ENCODE measurements at regions of chr18 and their contacts with region 1.

Region 1: DNA sequence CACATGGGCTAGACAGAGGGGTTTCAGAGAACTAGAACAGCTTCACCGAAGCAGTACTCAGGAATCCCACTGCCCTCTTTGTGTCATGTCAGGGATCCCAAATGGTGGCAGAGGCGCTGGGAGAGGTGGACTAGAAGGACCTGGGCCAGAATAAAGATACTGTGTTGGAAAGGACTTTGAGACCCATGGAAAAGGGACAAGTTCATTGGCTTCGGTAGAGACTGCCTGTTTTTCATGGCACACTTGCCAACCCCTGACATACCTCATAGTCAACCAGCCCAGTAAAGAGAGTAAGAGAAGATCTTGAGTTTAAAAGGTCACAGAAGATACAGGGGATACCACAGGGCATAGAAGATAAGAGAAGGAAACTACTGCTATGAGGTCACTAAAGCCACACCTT is 381.0 kb downstream of the RIT2 start:
- DNase-seq: no peak
- ATAC-seq: no peak

Region 2: DNA sequence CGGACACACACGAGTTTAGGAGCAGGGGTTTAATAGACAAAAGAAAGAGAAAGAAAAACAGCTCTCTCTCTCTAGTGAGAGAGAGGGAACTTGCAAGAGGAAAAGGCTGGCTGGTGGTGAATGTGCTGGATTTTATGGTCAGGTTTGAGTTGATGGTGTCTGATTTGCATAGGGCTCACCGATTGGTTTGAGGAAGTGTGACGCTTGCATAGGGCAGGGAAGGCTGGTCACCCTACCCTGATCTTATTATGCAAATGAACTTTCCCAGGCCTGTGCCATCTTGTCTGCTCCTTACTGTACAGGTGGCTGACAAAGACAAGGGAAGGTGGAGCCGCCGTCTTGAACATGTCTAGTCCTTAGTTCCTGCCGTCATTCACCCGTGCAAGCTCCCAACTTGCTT is 27.9 kb before region 1 on chr18:
- intact Hi-C with region 1: no loop called
- DNase-seq: no peak
- ATAC-seq: no peak

Region 3: DNA sequence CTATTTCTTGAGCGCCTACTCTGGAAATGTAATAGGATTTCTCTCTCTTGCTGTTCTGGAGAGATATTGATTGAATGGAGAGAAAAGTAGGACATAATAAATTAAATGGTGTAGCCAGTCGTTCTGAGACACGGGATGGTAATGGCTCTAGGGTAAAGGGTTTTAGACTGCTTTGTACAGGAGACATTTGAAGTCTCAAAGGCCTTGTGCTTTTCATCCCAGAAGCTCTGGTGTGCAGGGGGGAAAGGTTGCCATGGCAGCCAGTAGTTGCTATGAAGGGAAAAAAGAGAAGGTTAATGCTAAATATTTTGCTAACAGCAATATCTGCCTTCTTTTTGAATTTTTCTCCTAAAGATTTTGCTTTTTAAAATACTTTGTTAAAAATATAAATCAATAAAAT is 21.7 kb after region 1 on chr18:
- intact Hi-C with region 1: loop called (anchors 2 kb)
- DNase-seq: no peak
- ATAC-seq: no peak